ENCODE measurements at regions of chr6 and their contacts with region 1.

Region 1: GRCh38 chr6:170529839-170530469 is 23.2 kb downstream of the PSMB1 start:
- DNase-seq: peak; percentile 67
- H3K4me3 ChIP-seq: no peak overlapping the region
- H3K27ac ChIP-seq: no peak overlapping the region
- H3K4me1 ChIP-seq: no peaks in the 10 kb centered on the region
- H3K27me3 ChIP-seq: no peaks in the 10 kb centered on the region
- CTCF ChIP-seq: peak; percentile 71 to 87 (median 76)
- EP300 ChIP-seq: no peak
- POLR2A ChIP-seq: no peak

Region 2: DNA sequence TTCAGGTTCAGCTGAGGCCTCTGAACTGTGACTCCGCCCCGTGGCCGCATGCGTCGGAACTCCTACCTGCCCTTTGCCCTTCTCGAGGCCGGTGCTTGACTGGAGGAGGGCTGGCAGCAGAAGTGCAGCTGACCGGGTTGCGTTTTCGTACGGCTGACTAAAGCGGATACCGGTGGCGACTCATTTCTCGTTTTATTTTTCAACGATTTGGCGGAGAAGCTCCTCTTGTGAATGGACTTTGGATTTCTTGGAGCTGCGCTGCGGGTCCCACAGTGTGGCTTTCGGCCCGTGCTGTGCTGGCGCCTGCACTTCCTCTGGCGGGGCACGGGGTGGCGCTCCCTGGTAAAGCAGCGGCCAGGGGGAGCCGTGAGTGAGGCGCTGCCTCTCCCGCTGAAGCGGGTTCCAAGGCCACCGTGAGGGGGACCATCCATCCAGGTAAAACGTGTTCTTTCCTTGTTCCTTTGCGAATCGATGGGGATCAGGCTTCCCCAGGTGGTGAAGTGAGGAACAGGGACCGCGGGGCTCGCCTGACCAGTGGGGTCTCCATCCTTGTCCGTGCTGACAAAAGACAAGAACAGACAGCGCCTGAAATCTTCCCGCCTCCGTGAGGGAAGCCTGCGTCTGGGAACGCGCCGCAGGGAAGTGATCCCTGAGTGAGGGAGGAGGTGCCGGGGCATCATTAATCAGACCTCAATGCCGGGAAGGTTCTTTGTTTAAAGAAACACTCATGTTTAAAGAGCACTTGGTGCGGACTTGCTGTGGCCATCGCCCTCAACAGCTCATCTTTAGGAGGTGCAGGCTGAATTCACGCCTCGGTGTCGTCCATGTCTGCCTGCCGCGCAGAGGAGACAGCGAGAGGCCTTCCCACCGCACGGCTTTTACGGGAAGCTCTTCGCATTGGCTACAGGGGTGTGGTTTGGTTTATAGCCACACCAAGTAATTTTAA is 739.7 kb before region 1 on chr6:
- in situ Hi-C with region 1: no loop called
- intact Hi-C with region 1: loop called (anchors 10 kb)
- DNase-seq: peak; percentile 79
- H3K4me3 ChIP-seq: peak overlapping the region; percentile 30 to 54 (median 32)
- H3K27ac ChIP-seq: peak overlapping the region; percentile 69 to 82 (median 74)
- H3K4me1 ChIP-seq: peaks cover 0 to 16% (median 14%) of the 10 kb centered on the region in 4 donors
- H3K27me3 ChIP-seq: no peaks in the 10 kb centered on the region
- CTCF ChIP-seq: peak; percentile 96 to 99 (median 96)
- EP300 ChIP-seq: no peak
- POLR2A ChIP-seq: no peak

Region 3: DNA sequence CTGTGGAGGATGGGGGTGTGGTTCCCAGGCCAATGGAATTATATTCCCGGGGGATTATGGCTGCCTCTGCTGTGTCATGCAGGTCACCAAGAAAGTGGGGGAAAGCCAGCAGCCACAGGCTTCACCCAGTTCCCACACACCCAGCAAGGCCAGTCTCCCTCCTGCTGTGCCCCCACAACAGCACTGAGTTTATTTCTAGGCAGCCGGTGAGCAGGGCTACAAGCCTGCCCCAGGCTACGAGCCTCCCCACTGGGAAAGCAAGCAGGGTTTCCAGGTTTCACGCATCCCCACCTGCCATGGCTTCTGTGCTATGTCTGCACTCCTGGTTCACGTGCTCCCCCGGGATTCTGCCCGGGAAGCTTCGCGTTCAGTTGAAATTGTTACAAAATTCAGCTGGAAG is 705.9 kb before region 1 on chr6:
- in situ Hi-C with region 1: loop called in 1 of 4 experiments (anchors 10 kb)
- intact Hi-C with region 1: no loop called
- DNase-seq: no peak
- H3K4me3 ChIP-seq: no peak overlapping the region
- H3K27ac ChIP-seq: no peak overlapping the region
- H3K4me1 ChIP-seq: no peaks in the 10 kb centered on the region
- H3K27me3 ChIP-seq: no peaks in the 10 kb centered on the region
- CTCF ChIP-seq: no peak
- EP300 ChIP-seq: no peak
- POLR2A ChIP-seq: no peak

Region 4: GRCh38 chr6:170584181-170584953 is 54.4 kb after region 1 on chr6 and contains the start of gene PDCD2:
- in situ Hi-C with region 1: no loop called
- intact Hi-C with region 1: no loop called
- DNase-seq: peak; percentile 95
- H3K4me3 ChIP-seq: peak within 1 kb of the TSS; percentile 87 to 99 (median 94)
- H3K27ac ChIP-seq: peak within 1 kb of the TSS; percentile 92 to 95 (median 94)
- H3K4me1 ChIP-seq: peaks cover 6 to 17% (median 14%) of the 10 kb centered on the region in 4 donors
- H3K27me3 ChIP-seq: no peaks in the 10 kb centered on the region
- CTCF ChIP-seq: no peak
- EP300 ChIP-seq: no peak
- POLR2A ChIP-seq: peak; percentile 59
- total RNA-seq, gene PDCD2: 38.0 to 82.4 (median 62.6) TPM